PC-9 (cell line): ENCODE measurements at regions of chr12 and their contacts with region 1.

Region 1: DNA sequence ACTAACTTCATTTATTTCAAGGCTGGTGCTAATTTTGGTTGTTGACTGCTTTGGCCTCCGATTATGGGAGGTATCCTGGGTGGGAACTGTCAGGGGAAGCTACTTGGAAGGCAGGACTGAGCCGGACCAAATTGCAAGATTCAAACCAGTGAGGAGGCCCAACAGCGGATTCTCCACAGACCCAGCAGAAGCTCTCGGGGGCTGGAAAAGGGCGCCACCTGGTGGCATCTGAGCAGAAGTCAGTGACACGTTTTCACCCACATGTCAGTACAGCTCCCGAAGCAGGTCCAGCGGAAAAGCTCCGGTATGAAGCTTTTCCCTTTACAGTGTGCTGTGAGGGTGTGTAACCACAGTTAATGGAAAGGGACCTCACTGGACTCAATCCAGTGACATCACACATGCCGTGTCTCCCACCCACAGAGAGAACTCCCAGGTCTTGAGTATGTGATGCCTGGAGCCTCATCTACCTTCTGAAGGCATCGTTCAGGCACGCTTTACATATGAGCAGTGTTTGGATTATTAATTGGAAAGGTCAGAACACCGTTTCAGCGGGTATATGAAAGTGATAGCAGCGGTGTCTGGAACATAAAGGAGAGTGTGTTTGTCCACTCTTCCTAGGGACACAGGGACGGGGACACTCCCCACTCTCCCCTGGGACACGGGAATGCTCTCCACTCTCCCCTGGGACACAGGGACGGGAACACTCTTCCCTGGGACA is 3.6 kb upstream of the P2RX2 start:
- DNase-seq: peak; percentile 63 to 72
- H3K4me3 ChIP-seq: no peak overlapping the region
- H3K27ac ChIP-seq: no peak overlapping the region
- H3K4me1 ChIP-seq: no peaks in the 10 kb centered on the region
- H3K27me3 ChIP-seq: peaks cover 45% of the 10 kb centered on the region
- CTCF ChIP-seq: peak; percentile 93

Region 2: GRCh38 chr12:131872185-131873051 is 742.6 kb before region 1 on chr12:
- CTCF ChIA-PET with region 1: no interaction called
- POLR2A ChIA-PET with region 1: interaction called, 10 read pairs
- intact Hi-C with region 1: no loop called
- DNase-seq: peak; percentile 93 to 99
- H3K4me3 ChIP-seq: 0 out of 2 replicates have a peak overlapping the region, but pooled peaks have one; percentile 37
- H3K27ac ChIP-seq: peak overlapping the region; percentile 62
- H3K4me1 ChIP-seq: peaks cover 68% of the 10 kb centered on the region
- H3K27me3 ChIP-seq: no peaks in the 10 kb centered on the region
- CTCF ChIP-seq: no peak

Region 3: GRCh38 chr12:132414634-132415326 is 200.2 kb before region 1 on chr12:
- CTCF ChIA-PET with region 1: interaction called, 5 read pairs
- POLR2A ChIA-PET with region 1: interaction called, 3 read pairs
- intact Hi-C with region 1: loop called (anchors 1 kb)
- DNase-seq: peak; percentile 53 to 84
- H3K4me3 ChIP-seq: no peak overlapping the region
- H3K27ac ChIP-seq: no peak overlapping the region
- H3K4me1 ChIP-seq: no peaks in the 10 kb centered on the region
- H3K27me3 ChIP-seq: peaks cover 50% of the 10 kb centered on the region
- CTCF ChIP-seq: peak; percentile 91